Activated CD4-positive, alpha-beta T cell treated with anti-CD3 and anti-CD28 coated beads for 36 hours (primary cell): ENCODE measurements at regions of chr4 and their contacts with region 1.

Region 1: GRCh38 chr4:144174401-144175067 is 34.0 kb upstream of the GYPA start:
- DNase-seq: peak; percentile 42
- ATAC-seq: peak; percentile 84
- H3K4me3 Mint-ChIP-seq: no peak overlapping the region
- H3K27ac Mint-ChIP-seq: peak overlapping the region; percentile 72
- H3K4me1 Mint-ChIP-seq: peaks cover 17% of the 10 kb centered on the region
- H3K27me3 Mint-ChIP-seq: peaks cover 3% of the 10 kb centered on the region

Region 2: GRCh38 chr4:143270256-143270838 is 904.2 kb before region 1 on chr4:
- CTCF ChIA-PET with region 1: no interaction called
- POLR2A ChIA-PET with region 1: no interaction called
- intact Hi-C with region 1: no loop called
- DNase-seq: no peak
- ATAC-seq: no peak
- H3K4me3 Mint-ChIP-seq: no peak overlapping the region
- H3K27ac Mint-ChIP-seq: no peak overlapping the region
- H3K4me1 Mint-ChIP-seq: no peaks in the 10 kb centered on the region
- H3K27me3 Mint-ChIP-seq: peaks cover 2% of the 10 kb centered on the region

Region 3: DNA sequence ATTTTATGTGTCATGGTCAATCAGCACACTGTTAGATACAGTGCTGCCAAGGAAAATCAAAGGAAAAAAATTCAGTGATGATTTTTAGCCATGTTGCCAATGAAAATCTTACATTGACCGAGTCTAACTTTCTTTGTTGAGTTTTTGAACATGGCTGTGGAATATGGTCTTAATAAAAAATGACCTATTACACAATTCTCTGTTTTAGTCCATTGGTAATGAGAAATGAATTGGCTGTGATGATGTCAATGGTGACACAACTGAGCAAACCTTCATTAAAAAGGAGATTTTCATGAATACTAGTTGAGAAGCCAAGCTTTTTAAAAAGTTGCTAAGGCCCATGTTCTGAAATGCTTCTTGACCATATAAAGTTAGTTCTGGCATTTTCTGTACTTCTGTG is 191.9 kb after region 1 on chr4:
- CTCF ChIA-PET with region 1: no interaction called
- POLR2A ChIA-PET with region 1: no interaction called
- intact Hi-C with region 1: loop called in 1 of 2 experiments (anchors 5 kb)
- DNase-seq: no peak
- ATAC-seq: no peak
- H3K4me3 Mint-ChIP-seq: no peak overlapping the region
- H3K27ac Mint-ChIP-seq: no peak overlapping the region
- H3K4me1 Mint-ChIP-seq: no peaks in the 10 kb centered on the region
- H3K27me3 Mint-ChIP-seq: no peaks in the 10 kb centered on the region

Region 4: DNA sequence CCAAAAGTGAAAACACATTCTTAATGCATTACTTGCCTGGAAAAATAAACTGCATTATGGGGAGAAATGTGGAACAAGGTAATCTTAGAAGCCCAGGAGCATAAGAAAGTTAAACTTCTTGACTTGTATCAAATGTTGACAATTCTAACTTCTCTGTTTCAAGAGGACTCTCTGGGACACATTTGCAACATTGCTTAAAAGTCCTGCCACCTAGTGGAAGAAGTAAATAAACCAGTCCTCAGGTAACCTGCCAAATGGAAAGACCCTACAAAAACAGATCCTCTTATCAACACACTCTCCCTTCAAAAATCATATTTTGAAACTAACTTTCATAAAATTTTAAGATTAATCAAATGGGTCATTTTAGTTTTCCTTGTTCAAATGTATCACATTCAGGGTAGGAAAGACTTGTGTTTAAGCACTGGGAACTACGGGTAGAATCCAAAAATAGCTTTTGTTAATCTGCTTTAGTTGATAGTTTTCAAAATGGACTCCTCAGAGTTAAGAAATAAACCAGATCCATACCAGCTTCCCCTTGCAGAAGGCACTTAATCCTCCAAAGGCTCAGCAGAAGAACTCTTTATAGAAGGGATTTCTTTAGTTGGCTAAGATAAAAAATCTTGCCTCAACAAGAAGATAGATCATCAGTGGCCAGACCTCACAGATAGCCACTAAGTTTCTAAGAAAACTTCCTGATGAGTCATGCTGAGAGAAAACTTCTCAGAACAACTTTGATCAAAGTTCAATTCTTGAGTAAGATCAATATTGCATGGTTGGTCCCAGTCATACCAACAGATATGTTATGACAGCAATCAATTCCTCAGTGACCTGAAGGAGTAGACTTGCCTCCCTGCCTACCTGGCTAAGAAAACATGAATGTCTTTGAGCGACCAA is 613.1 kb after region 1 on chr4:
- CTCF ChIA-PET with region 1: no interaction called
- POLR2A ChIA-PET with region 1: no interaction called
- intact Hi-C with region 1: loop called (anchors 1 to 5 kb)
- DNase-seq: no peak
- ATAC-seq: no peak
- H3K4me3 Mint-ChIP-seq: no peak overlapping the region
- H3K27ac Mint-ChIP-seq: no peak overlapping the region
- H3K4me1 Mint-ChIP-seq: no peaks in the 10 kb centered on the region
- H3K27me3 Mint-ChIP-seq: peaks cover 2% of the 10 kb centered on the region

Region 5: GRCh38 chr4:145234091-145234706 is 1059.7 kb after region 1 on chr4:
- CTCF ChIA-PET with region 1: no interaction called
- POLR2A ChIA-PET with region 1: no interaction called
- intact Hi-C with region 1: loop called (anchors 5 to 10 kb)
- DNase-seq: peak; percentile 78
- ATAC-seq: peak; percentile 98
- H3K4me3 Mint-ChIP-seq: no peak overlapping the region
- H3K27ac Mint-ChIP-seq: no peak overlapping the region
- H3K4me1 Mint-ChIP-seq: no peaks in the 10 kb centered on the region
- H3K27me3 Mint-ChIP-seq: no peaks in the 10 kb centered on the region